Lower leg skin (tissue), 4 donors: ENCODE measurements at regions of chr9 and their contacts with region 1.

Region 1: GRCh38 chr9:127035951-127036350 is 86.5 kb downstream of the ANGPTL2 start:
- DNase-seq: peak in 1 of 2 donors; percentile 83
- H3K4me3 ChIP-seq: no peak overlapping the region
- CTCF ChIP-seq: no peak
- POLR2A ChIP-seq: no peak

Region 2: GRCh38 chr9:126366366-126367011 is 669.5 kb before region 1 on chr9:
- intact Hi-C with region 1: no loop called
- DNase-seq: peak in 1 of 2 donors; percentile 70
- H3K4me3 ChIP-seq: no peak overlapping the region
- CTCF ChIP-seq: no peak
- POLR2A ChIP-seq: no peak

Region 3: DNA sequence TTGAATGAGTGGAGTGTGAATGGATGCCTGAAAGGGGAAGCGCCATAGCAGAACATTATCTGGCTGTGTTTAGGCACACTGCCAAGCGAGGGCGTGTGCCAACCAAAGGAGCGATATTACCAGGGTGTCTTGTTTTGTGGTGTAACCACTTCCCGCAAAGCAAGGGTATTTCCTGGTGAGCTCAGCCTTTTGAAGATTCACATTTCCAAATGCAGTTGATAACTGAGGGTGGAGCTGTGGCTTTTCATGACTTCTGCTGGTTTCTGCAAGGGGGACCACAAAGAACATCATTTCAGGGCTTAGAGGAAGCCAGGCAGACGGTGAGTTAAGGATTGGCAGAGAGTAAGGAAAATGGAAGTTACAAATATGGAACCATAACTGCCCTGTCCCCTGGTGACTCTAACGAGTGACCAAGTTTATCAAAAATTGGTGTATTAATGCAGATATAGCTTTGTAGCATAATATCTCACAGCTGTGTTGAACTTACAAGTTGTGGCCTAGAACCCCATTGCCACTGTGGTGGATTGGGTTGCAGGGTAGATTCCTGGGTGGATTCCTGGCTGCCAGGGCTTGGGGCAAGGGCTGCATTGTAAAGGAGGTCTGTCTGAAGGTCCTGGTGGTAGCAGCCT is 50.0 kb before region 1 on chr9:
- intact Hi-C with region 1: loop called (anchors 10 kb)
- DNase-seq: peak; percentile 75 to 90
- H3K4me3 ChIP-seq: no peak overlapping the region
- CTCF ChIP-seq: no peak
- POLR2A ChIP-seq: no peak